Posterior vena cava (tissue), 2 donors: ENCODE measurements at regions of chr16 and their contacts with region 1.

Region 1: GRCh38 chr16:85979605-85980004 is 80.6 kb downstream of the IRF8 start:
- DNase-seq: no peak

Region 2: DNA sequence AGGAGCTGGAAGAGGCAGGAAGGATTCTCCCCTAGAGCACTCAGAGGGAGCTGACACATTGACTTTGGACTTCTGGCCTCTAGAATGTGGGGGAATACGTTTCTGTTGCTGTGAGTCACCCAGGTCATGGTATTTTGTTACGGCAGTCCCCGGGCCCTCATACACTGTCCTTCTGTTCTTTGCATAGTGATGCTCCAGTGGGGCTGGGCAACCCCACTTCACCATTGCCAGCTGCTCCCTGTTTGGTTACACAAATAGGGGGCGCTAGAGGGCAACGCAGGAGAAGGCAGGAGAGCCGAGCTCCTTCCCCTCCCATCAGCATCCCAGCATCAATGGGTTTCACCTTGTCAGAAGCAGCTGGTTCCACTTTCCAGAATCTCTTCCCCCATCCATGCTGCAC is 273.0 kb after region 1 on chr16:
- intact Hi-C with region 1: no loop called
- DNase-seq: no peak

Region 3: GRCh38 chr16:86432691-86433090 is 453.1 kb after region 1 on chr16:
- intact Hi-C with region 1: loop called in 1 of 2 experiments (anchors 5 kb)
- DNase-seq: peak; percentile 84